ENCODE measurements at regions of chrX and their contacts with region 1.

Region 1: DNA sequence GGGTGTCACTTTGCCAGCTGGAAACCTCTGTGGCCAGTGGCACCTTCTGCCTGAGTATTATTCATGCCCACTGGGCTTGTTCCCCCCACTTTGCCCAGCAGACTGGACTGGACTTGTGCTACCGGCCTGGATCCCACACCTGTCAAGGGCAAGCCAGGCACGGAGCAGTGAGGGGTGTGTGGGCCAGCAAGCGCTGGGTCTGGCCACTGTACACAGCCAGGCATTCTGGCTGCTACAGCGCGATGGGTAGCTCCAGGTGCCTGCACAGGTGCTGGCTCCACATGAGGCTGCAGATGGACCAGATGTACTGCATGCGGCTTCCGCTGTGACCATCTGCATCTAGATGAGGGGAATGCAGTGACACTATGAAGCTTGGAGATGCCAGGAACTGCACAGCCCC is 39.5 kb downstream of the KCNE5 start:
- DNase-seq: no peak

Region 2: DNA sequence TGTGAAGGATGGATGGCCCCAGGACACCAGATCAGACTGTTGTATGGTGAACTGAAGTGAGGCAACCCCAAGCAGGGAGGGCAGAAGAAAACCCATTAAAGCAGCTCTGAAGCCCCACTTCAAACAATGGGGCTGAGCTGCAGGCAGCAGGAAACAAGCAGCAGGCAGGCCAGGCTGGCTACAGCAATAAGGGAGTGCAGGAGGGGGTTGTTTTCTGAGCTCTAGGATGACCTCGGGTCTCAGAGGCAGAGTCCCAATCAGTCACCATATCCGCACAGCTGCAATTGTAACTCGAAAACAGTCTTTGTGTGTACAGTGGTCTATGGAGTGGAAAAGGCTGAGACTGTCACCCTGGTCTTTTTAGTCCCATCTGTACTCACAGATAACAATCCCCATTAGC is 1237.7 kb before region 1 on chrX:
- intact Hi-C with region 1: loop called in 1 of 2 experiments (anchors 10 kb)
- DNase-seq: no peak

Region 3: GRCh38 chrX:108464604-108465003 is 1120.9 kb before region 1 on chrX:
- intact Hi-C with region 1: loop called in 1 of 2 experiments (anchors 5 kb)
- DNase-seq: no peak

Region 4: DNA sequence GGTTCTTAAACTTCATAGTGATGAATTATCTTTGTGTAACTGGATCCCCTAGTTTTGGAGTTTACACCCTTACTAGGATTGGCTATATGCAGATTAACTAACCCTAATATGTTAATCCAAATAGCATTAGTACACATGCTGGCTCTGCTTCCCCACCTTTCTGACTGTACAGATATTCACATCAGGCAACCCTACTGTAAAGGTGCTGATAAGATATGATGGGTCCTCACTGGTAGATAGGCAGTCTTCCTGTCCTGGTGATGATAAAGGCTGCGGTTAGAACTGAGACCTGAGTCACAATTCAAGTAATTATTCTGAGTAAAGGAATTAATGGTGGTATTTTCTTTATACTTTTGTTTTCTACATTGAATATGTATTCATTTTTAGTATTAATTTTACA is 1027.3 kb before region 1 on chrX:
- intact Hi-C with region 1: no loop called
- DNase-seq: no peak